Activated CD4-positive, alpha-beta T cell treated with anti-CD3 and anti-CD28 coated beads, Interleukin-2, amount 10 ng/mL, durations not matched to agents 7 days and 5 days (primary cell): ENCODE measurements at regions of chr5 and their contacts with region 1.

Region 1: GRCh38 chr5:35863159-35863558 is 6.5 kb downstream of the IL7R start:
- DNase-seq: peak; percentile 36
- H3K4me3 Mint-ChIP-seq: peak overlapping the region; percentile 88
- H3K27ac Mint-ChIP-seq: peak overlapping the region; percentile 72
- H3K4me1 Mint-ChIP-seq: peaks cover 72% of the 10 kb centered on the region
- H3K27me3 Mint-ChIP-seq: no peaks in the 10 kb centered on the region

Region 2: GRCh38 chr5:35672995-35673394 is 190.2 kb before region 1 on chr5:
- CTCF ChIA-PET with region 1: no interaction called
- POLR2A ChIA-PET with region 1: no interaction called
- DNase-seq: peak; percentile 50
- H3K4me3 Mint-ChIP-seq: peak overlapping the region; percentile 17
- H3K27ac Mint-ChIP-seq: peak overlapping the region; percentile 87
- H3K4me1 Mint-ChIP-seq: peaks cover 54% of the 10 kb centered on the region
- H3K27me3 Mint-ChIP-seq: no peaks in the 10 kb centered on the region

Region 3: GRCh38 chr5:35762368-35762767 is 100.8 kb before region 1 on chr5:
- CTCF ChIA-PET with region 1: no interaction called
- POLR2A ChIA-PET with region 1: no interaction called
- DNase-seq: no peak
- H3K4me3 Mint-ChIP-seq: no peak overlapping the region
- H3K27ac Mint-ChIP-seq: no peak overlapping the region
- H3K4me1 Mint-ChIP-seq: peaks cover 6% of the 10 kb centered on the region
- H3K27me3 Mint-ChIP-seq: no peaks in the 10 kb centered on the region

Region 4: DNA sequence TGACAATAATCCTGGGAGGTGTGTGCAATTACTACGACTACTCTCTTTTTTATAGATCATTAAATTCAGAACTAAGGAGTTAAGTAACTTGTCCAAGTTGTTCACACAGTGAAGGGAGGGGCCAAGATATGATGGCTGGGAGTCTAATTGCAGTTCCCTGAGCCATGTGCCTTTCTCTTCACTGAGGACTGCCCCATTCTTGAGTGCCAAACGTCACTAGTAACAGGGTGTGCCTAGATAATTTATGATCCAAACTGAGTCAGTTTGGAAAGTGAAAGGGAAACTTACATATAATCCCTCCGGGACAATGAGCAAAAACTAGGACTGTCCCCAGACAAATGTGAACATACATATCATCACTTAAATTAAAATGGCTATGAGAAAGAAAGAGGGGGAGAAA is 13.8 kb after region 1 on chr5:
- CTCF ChIA-PET with region 1: interaction called, 10 read pairs
- POLR2A ChIA-PET with region 1: interaction called, 3 read pairs
- DNase-seq: no peak
- H3K4me3 Mint-ChIP-seq: no peak overlapping the region
- H3K27ac Mint-ChIP-seq: peak overlapping the region; percentile 74
- H3K4me1 Mint-ChIP-seq: peaks cover 83% of the 10 kb centered on the region
- H3K27me3 Mint-ChIP-seq: no peaks in the 10 kb centered on the region

Region 5: DNA sequence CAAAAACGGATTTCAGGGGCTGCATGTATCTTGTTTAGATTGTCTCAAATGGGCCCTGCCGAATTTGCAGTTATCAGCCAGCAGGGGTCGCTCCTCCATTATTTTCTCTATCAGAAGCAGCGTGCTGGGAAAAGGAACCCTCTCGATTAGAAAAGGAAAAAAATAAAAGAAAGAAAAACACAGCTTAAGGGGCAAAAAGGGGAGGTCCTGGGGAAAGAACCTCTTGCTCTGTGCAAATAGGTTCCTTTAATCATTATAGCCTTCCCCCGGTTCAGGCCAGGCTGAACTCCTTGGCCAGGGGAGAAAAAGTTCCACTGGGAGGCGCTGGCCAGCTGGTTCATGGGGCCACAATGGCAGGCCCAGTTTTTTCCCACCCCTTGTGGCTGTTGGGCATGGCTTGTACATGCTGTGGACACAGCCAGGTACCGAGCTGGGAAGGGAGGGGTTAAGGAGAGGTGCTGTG is 100.3 kb after region 1 on chr5:
- CTCF ChIA-PET with region 1: no interaction called
- POLR2A ChIA-PET with region 1: no interaction called
- DNase-seq: no peak
- H3K4me3 Mint-ChIP-seq: no peak overlapping the region
- H3K27ac Mint-ChIP-seq: no peak overlapping the region
- H3K4me1 Mint-ChIP-seq: no peaks in the 10 kb centered on the region
- H3K27me3 Mint-ChIP-seq: peaks cover 17% of the 10 kb centered on the region